Activated CD4-positive, alpha-beta T cell treated with anti-CD3 and anti-CD28 coated beads, Interleukin-2, amount 10 ng/mL, durations not matched to agents 24 days and 14 days (primary cell): ENCODE measurements at regions of chr1 and their contacts with region 1.

Region 1: DNA sequence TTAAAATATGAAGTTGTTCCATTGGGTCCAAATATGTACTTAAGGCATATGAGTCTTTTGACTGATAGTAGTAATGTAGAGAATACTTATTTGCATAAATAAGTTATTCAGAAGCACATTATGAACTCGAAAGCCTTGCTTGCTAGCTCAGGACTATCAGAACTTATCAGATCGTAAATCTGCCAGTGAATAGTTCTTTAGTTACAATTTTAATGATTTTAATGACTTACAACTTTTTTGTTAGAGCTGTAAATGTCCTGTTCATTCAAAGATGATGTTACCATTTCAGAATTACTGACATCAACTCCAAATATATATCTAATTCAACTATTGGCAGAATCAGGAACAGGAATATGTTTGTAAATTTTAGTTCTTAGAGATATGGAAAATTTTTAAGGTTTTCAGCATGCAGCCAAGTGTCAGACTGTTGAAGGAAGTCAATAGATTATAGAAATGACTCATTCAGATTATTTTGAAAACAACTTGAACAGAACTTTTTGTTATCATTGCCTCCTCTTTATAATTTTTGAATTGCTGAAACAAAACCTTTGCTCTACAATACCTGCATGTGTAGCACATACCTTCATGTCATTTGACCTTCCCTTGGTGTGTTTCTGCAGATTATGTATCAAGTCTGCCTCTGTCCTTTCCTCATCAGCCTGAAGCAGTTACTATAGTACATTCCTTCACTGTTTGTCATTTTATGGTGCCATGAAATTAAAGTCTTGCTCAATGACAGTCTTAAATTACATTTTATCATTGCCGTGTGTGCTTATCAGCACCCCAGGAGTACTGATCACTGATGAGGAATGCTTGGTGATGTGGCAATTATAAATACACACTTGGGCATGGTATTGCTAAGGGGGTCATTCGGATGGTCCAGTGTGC is 44.9 kb downstream of the LRRC8D start:
- DNase-seq: no peak
- H3K4me3 Mint-ChIP-seq: no peak overlapping the region
- H3K27ac Mint-ChIP-seq: peak overlapping the region; percentile 8
- H3K4me1 Mint-ChIP-seq: peaks cover 49% of the 10 kb centered on the region
- H3K27me3 Mint-ChIP-seq: no peaks in the 10 kb centered on the region

Region 2: GRCh38 chr1:89881415-89882058 is 15.8 kb after region 1 on chr1:
- intact Hi-C with region 1: loop called (anchors 2 kb)
- DNase-seq: no peak
- H3K4me3 Mint-ChIP-seq: no peak overlapping the region
- H3K27ac Mint-ChIP-seq: no peak overlapping the region
- H3K4me1 Mint-ChIP-seq: peaks cover 11% of the 10 kb centered on the region
- H3K27me3 Mint-ChIP-seq: no peaks in the 10 kb centered on the region